Right cardiac atrium (tissue), 5 donors: ENCODE measurements at regions of chr6 and their contacts with region 1.

Region 1: DNA sequence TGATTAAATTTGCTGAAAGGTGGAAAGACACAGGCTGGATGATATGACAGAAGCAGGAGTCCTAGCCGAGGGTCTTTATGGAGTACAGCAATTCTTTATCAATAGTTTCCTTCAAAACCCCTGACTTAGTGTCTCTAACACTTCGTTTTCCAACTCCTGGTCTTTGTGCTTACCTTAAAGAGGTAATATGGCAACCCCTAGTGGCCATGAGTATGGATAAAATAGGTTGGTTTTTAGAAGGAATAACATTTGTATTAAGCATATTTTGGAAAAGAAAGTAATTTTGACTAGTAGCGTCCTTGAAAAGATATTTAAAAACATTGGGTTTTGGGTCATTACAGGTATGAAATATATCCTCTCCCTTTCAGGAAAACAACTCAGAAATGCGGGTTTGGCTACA is 51.9 kb downstream of the VGLL2 start:
- DNase-seq: no peak
- ATAC-seq: no peak
- H3K4me3 ChIP-seq: no peak overlapping the region
- H3K27ac ChIP-seq: no peak overlapping the region
- H3K4me1 ChIP-seq: no peaks in the 10 kb centered on the region
- H3K27me3 ChIP-seq: no peaks in the 10 kb centered on the region

Region 2: DNA sequence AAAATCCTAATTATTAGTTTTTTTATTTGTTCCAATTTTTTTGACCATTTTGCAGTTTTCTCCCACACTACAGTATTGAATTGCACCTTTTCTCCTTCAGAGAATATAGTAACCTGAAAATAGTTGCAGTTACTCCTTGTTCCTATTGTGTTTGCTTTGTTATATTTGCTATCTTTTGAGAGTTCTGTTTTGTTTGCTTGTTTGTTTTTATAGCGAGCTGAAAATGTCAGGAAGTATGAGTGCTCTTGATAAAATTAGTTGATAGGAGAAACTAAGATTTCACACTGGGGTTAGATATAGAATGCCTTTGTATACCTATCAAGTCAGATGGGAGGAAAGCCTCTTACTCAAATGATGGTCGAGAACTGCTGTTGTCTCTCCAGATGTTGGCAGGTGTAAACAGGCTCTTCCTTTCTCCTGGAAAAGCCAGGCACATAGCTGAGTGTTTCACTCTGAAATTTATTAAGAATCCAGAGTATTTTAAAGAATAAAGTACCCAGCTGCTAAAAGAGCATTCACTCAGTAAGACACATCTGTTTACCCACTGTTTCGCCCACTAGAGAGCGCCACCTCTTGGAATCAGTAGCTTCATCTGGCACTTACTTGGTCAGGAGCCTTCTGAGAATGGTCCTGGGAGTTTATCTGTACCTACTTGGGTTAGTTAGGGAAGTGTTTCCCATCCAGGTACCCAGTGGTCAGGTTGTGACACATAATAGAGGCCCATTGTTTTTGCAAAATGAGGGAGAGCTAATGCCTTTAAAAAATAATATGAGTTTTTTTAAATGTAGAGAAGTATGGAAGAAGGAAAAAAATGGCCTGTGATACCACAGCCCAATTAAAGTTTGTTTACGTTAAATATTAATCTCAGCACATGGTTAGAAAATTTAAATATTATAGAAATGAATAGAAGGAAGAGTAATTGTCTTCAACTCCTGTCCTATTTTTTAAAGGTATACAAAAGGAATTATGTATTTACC is 1205.4 kb before region 1 on chr6:
- intact Hi-C with region 1: no loop called
- DNase-seq: peak in 1 of 3 donors; percentile 59
- ATAC-seq: peak in 1 of 2 donors; percentile 36
- H3K4me3 ChIP-seq: no peak overlapping the region
- H3K27ac ChIP-seq: no peak overlapping the region
- H3K4me1 ChIP-seq: peaks cover 2% of the 10 kb centered on the region
- H3K27me3 ChIP-seq: no peaks in the 10 kb centered on the region

Region 3: DNA sequence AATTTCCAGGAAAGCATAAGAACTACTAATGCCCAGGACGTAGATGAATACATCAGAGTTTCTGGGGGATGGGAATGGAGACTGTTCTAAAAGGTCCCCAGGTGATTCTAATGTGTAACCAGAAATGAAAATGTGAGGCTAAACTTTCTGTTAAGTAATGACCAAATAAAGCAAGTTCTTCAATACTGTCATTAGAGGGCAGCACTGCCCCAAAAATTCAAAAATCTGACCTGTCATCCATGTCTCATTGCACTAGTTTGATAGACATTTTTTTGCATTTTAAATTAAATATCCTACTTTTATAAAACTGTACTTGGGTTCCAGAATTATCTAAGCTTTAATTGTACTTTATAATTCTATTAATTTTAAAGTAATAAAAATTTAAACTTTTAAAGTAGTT is 345.3 kb before region 1 on chr6:
- intact Hi-C with region 1: loop called (anchors 5 to 10 kb)
- DNase-seq: no peak
- ATAC-seq: no peak
- H3K4me3 ChIP-seq: no peak overlapping the region
- H3K27ac ChIP-seq: no peak overlapping the region
- H3K4me1 ChIP-seq: no peaks in the 10 kb centered on the region
- H3K27me3 ChIP-seq: no peaks in the 10 kb centered on the region